Panc1 (cell line): ENCODE measurements at regions of chr15 and their contacts with region 1.

Region 1: GRCh38 chr15:40367686-40368611 is 9.9 kb downstream of the DISP2 start:
- DNase-seq: no peak
- ATAC-seq: peak; percentile 85
- H3K4me3 ChIP-seq: 0 out of 4 replicates have a peak overlapping the region, but pooled peaks of 1 of the 2 experiments have one; percentile 8
- H3K27ac ChIP-seq: no peak overlapping the region
- H3K4me1 ChIP-seq: no peaks in the 10 kb centered on the region
- H3K27me3 ChIP-seq: no peaks in the 10 kb centered on the region
- CTCF ChIP-seq: peak; percentile 89

Region 2: DNA sequence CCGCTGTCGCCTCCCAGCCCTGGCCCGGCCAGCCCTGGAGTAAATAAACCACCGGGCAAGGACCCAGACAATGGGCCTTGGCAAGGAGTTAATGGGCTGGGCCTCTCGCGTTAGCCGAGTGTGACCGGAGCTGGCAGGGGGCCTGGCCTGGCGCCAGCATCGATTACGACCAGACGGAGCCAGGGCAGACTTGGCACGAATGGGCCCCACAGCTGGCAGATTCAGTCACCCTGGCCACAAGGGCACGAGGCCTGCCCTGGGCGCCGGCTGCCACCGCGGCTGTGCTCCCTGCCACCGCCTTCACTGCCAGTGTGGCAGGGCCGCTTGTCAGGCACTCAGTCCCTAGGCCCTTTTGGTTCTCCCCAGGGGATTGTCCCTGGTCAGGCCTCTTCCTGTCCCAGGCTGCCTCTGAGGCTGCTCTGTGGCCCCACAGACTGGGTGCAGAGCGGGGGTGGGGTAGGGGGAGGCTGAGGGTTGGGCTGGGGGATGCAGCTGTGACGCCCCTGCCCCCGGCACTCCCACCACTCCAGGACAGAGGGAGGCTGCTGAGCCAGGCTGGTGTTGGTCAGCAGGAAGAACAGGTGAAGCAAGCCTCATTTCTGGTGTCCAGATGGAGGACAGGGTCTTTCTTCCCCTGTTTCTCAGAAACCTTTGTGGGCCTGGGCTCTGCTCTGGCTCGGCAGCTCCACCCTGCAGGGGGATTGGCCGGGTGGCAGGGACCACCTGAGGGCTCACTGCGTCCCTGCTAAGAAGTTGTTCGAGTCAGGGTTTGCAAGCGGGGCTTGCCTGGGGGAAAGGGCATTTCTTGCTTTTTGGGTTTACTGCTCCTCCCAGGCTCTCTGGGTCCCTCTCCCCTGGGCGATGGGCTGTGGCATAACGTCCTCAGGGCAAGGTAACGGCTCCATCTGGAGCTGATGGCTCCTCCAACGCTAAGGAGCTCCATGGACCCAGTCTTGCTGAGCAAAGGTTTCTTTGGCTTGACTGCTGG is 298.5 kb before region 1 on chr15:
- CTCF ChIA-PET with region 1: no interaction called
- POLR2A ChIA-PET with region 1: no interaction called
- in situ Hi-C with region 1: no loop called
- intact Hi-C with region 1: no loop called
- DNase-seq: peak; percentile 71
- ATAC-seq: peak; percentile 92
- H3K4me3 ChIP-seq: peak overlapping the region in 1 of 2 experiments; percentile 25; a peak in 1 of 4 replicates
- H3K27ac ChIP-seq: peak overlapping the region; percentile 81
- H3K4me1 ChIP-seq: peaks cover 46% of the 10 kb centered on the region
- H3K27me3 ChIP-seq: no peaks in the 10 kb centered on the region
- CTCF ChIP-seq: no peak

Region 3: GRCh38 chr15:40344631-40345120 is 23.3 kb before region 1 on chr15:
- CTCF ChIA-PET with region 1: interaction called, 12 read pairs
- POLR2A ChIA-PET with region 1: no interaction called
- in situ Hi-C with region 1: no loop called
- intact Hi-C with region 1: no loop called
- DNase-seq: no peak
- ATAC-seq: peak; percentile 42
- H3K4me3 ChIP-seq: no peak overlapping the region
- H3K27ac ChIP-seq: no peak overlapping the region
- H3K4me1 ChIP-seq: peaks cover 39% of the 10 kb centered on the region
- H3K27me3 ChIP-seq: no peaks in the 10 kb centered on the region
- CTCF ChIP-seq: peak; percentile 93